K562 (cell line): ENCODE measurements at regions of chr6 and their contacts with region 1.

Region 1: GRCh38 chr6:33248925-33249731 is 22.5 kb downstream of the VPS52 start:
- DNase-seq: peak; percentile 95 to 100 (median 96)
- ATAC-seq: peak; percentile 97
- H3K4me3 ChIP-seq: peak overlapping the region; percentile 53
- H3K27ac ChIP-seq: peak overlapping the region; percentile 91
- H3K4me1 ChIP-seq: peaks cover 22 to 31% of the 10 kb centered on the region in 2 experiments
- H3K27me3 ChIP-seq: peaks cover 4 to 6% of the 10 kb centered on the region in 2 experiments; a peak in 2 of 5 replicates
- CTCF ChIP-seq: peak; percentile 34 to 52 (median 48); a peak in 5 of 6 replicates
- EP300 ChIP-seq: 0 out of 2 replicates have a peak, but pooled peaks have one; percentile 6
- POLR2A ChIP-seq: peak; percentile 96
- RAD21 ChIP-seq: 0 out of 4 replicates have a peak, but pooled peaks of 1 of the 2 experiments have one; percentile 25

Region 2: GRCh38 chr6:33118525-33119123 is 130.5 kb before region 1 on chr6:
- CTCF ChIA-PET with region 1: interaction called, 24 read pairs
- POLR2A ChIA-PET with region 1: interaction called, 12 read pairs
- in situ Hi-C with region 1: loop called (anchors 5 kb)
- intact Hi-C with region 1: loop called (anchors 1 kb)
- DNase-seq: peak; percentile 56 to 72 (median 60)
- ATAC-seq: peak; percentile 63; the same call in 2 of the 3 replicates
- H3K4me3 ChIP-seq: no peak overlapping the region
- H3K27ac ChIP-seq: no peak overlapping the region
- H3K4me1 ChIP-seq: peaks cover 0 to 6% of the 10 kb centered on the region in 2 experiments; a peak in 1 of 5 replicates
- H3K27me3 ChIP-seq: peaks cover 16 to 28% of the 10 kb centered on the region in 2 experiments
- CTCF ChIP-seq: peak; percentile 59 to 86 (median 63); a peak in 5 of 6 replicates
- EP300 ChIP-seq: no peak
- POLR2A ChIP-seq: no peak
- RAD21 ChIP-seq: peak; percentile 68 to 79

Region 3: GRCh38 chr6:33161354-33162331 is 87.5 kb before region 1 on chr6:
- CTCF ChIA-PET with region 1: interaction called, 21 read pairs
- POLR2A ChIA-PET with region 1: interaction called, 6 read pairs
- in situ Hi-C with region 1: no loop called
- intact Hi-C with region 1: loop called (anchors 1 kb)
- DNase-seq: peak; percentile 83 to 95 (median 93)
- ATAC-seq: peak; percentile 97
- H3K4me3 ChIP-seq: peak overlapping the region; percentile 30
- H3K27ac ChIP-seq: no peak overlapping the region
- H3K4me1 ChIP-seq: peaks cover 7 to 26% of the 10 kb centered on the region in 2 experiments; a peak in 3 of 5 replicates
- H3K27me3 ChIP-seq: peaks cover 5 to 39% of the 10 kb centered on the region in 2 experiments; a peak in 3 of 5 replicates
- CTCF ChIP-seq: peak; percentile 93 to 96 (median 94)
- EP300 ChIP-seq: no peak
- POLR2A ChIP-seq: 0 out of 2 replicates have a peak, but pooled peaks have one; percentile 32
- RAD21 ChIP-seq: peak; percentile 66 to 83

Region 4: DNA sequence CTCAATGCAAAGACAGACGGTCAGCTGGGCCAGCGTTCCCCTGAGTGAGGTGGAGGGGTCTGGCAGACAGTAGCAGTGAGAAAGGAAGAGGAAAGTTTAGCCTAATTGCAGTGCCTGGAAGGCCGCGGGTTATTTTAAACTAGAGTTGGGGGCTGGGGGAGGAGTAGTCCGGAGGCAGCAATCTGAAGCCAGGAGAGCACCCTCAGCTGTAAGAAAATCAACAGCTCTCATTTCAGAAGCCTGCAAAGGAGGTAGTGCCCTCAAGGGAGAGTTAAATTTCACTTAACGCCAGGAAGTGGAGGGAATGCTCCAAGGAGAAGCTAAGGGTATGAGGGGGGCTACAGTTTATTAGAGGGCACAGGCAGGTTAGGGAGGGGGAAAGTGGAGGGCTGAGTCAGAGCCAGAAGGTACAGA is 13.9 kb before region 1 on chr6:
- CTCF ChIA-PET with region 1: no interaction called
- POLR2A ChIA-PET with region 1: interaction called, 57 read pairs
- in situ Hi-C with region 1: no loop called
- intact Hi-C with region 1: no loop called
- DNase-seq: no peak
- ATAC-seq: no peak
- H3K4me3 ChIP-seq: no peak overlapping the region
- H3K27ac ChIP-seq: no peak overlapping the region
- H3K4me1 ChIP-seq: no peaks in the 10 kb centered on the region
- H3K27me3 ChIP-seq: peaks cover 58 to 67% of the 10 kb centered on the region in 2 experiments
- CTCF ChIP-seq: no peak
- EP300 ChIP-seq: no peak
- POLR2A ChIP-seq: no peak
- RAD21 ChIP-seq: no peak

Region 5: DNA sequence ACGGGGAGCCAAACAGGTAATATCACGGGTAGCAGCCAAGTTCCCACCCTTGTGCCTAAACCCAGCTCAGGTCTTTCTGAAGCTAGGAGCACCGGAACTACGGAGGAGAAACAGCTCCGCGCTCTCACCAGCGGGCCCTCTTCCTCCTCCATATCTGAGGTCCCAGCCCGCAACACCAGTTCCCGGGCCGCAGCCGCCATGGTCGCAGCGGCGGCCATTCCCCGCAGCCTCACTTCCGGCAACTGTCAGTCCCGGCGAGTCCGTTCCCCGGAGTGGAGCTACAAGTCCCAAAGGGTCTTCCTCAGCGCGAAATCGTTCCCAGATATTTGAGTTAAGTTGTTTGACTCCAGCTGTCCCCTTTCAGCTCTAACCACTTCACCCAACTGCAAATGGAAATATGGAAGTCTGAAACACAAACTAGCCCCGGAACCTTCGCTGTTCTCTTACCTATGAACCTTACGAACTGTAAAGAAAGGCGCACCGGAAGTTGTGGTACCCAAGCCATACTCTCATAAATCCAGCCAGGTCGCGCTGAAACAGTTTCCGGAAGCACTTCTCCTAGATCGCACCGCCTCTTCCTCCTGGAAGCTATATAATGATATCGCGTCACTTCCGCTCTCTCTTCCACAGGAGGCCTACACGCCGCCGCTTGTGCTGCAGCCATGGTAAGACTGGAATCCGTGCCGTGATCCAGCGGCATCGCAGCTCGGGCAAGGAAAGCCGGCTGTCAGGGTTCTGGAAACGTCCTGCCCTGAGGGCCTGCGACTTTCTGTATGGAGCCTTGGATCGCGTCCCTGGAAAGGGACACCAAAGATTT is 22.5 kb after region 1 on chr6 and contains the starts of genes RPS18 and VPS52:
- CTCF ChIA-PET with region 1: interaction called, 4 read pairs
- POLR2A ChIA-PET with region 1: interaction called, 47 read pairs
- in situ Hi-C with region 1: no loop called
- intact Hi-C with region 1: no loop called
- DNase-seq: peak; percentile 89 to 100 (median 92)
- ATAC-seq: peak; percentile 85
- H3K4me3 ChIP-seq: peak within 1 kb of the TSS; percentile 93
- H3K27ac ChIP-seq: peak within 1 kb of the TSS; percentile 98
- H3K4me1 ChIP-seq: peaks cover 11 to 38% of the 10 kb centered on the region in 2 experiments
- H3K27me3 ChIP-seq: no peaks in the 10 kb centered on the region; a peak in 1 of 5 replicates
- CTCF ChIP-seq: 0 out of 6 replicates have a peak, but pooled peaks of 1 of the 3 experiments have one; percentile 4
- EP300 ChIP-seq: peak; percentile 68; the same call in 1 of the 2 replicates
- POLR2A ChIP-seq: peak; percentile 100
- RAD21 ChIP-seq: peak in 1 of 2 experiments; percentile 16; a peak in 1 of 4 replicates
- polyA plus RNA-seq, gene RPS18: 14,899 to 17,516 TPM
- polyA plus RNA-seq, gene VPS52: 24.4 to 37.6 TPM

Region 6: GRCh38 chr6:33391278-33391921 is 142.3 kb after region 1 on chr6 and contains the start of gene KIFC1:
- CTCF ChIA-PET with region 1: no interaction called
- POLR2A ChIA-PET with region 1: no interaction called
- in situ Hi-C with region 1: no loop called
- intact Hi-C with region 1: no loop called
- DNase-seq: peak; percentile 98 to 100 (median 98)
- ATAC-seq: peak; percentile 97
- H3K4me3 ChIP-seq: peak within 1 kb of the TSS; percentile 74
- H3K27ac ChIP-seq: peak within 1 kb of the TSS; percentile 89
- H3K4me1 ChIP-seq: peaks cover 19 to 22% of the 10 kb centered on the region in 2 experiments
- H3K27me3 ChIP-seq: no peaks in the 10 kb centered on the region
- CTCF ChIP-seq: peak; percentile 99 to 100 (median 99)
- EP300 ChIP-seq: peak; percentile 39; the same call in 1 of the 2 replicates
- POLR2A ChIP-seq: 0 out of 2 replicates have a peak, but pooled peaks have one; percentile 85
- RAD21 ChIP-seq: peak; percentile 86 to 89
- polyA plus RNA-seq, gene KIFC1: 1.3 to 2.2 TPM

Region 7: DNA sequence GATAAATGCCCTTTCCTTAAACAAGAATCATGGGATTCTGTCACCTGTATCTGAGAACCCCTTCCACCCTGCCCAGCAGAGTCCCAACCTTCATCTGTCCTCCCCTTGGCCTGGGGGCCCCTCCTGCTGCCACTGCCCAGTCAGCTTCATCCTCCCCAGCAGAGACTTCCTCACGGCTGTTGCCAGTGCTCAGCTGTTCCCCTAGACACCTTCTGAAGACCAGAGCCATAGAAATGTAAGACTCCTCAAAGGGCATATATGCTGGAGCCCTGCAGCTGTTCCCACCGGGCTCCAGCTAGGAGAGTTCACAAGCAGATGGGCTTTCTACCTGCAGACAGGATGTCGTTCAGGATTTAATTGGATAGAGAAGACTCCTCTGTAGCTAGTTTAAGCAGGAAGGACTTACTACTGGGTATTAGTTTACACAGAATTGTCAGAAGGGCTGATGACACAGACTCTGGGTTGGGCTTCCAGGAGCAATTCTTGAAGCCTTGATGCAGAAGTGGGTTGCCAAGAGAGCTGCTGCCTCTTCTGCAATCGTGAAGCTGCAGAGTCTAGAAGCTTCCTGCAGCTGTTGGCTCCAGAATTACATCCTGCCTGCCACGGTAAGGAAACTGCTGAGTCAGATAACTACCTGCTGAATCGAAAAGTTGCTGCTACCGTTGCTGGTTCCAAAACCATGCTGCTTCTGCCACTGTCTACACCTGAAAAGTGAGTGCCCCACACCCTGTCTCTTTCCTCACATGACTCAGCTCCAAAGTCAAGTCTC is 611.8 kb after region 1 on chr6:
- CTCF ChIA-PET with region 1: no interaction called
- POLR2A ChIA-PET with region 1: no interaction called
- in situ Hi-C with region 1: no loop called
- intact Hi-C with region 1: no loop called
- DNase-seq: no peak
- ATAC-seq: no peak; the same call in 2 of the 3 replicates
- H3K4me3 ChIP-seq: no peak overlapping the region
- H3K27ac ChIP-seq: no peak overlapping the region
- H3K4me1 ChIP-seq: peaks cover 0 to 21% of the 10 kb centered on the region in 2 experiments; a peak in 3 of 5 replicates
- H3K27me3 ChIP-seq: peaks cover 10 to 28% of the 10 kb centered on the region in 2 experiments
- CTCF ChIP-seq: no peak
- EP300 ChIP-seq: no peak
- POLR2A ChIP-seq: no peak
- RAD21 ChIP-seq: no peak